ENCODE measurements at regions of chr1 and their contacts with region 1.

Region 1: GRCh38 chr1:44819608-44820327 is 11.4 kb downstream of the BTBD19 start:
- DNase-seq: peak in 41 of 42 donors; percentile 45 to 85 (median 67)

Region 2: GRCh38 chr1:44472620-44473525 is 346.9 kb before region 1 on chr1:
- intact Hi-C with region 1: no loop called
- DNase-seq: peak in 1 of 42 donors; percentile 33

Region 3: DNA sequence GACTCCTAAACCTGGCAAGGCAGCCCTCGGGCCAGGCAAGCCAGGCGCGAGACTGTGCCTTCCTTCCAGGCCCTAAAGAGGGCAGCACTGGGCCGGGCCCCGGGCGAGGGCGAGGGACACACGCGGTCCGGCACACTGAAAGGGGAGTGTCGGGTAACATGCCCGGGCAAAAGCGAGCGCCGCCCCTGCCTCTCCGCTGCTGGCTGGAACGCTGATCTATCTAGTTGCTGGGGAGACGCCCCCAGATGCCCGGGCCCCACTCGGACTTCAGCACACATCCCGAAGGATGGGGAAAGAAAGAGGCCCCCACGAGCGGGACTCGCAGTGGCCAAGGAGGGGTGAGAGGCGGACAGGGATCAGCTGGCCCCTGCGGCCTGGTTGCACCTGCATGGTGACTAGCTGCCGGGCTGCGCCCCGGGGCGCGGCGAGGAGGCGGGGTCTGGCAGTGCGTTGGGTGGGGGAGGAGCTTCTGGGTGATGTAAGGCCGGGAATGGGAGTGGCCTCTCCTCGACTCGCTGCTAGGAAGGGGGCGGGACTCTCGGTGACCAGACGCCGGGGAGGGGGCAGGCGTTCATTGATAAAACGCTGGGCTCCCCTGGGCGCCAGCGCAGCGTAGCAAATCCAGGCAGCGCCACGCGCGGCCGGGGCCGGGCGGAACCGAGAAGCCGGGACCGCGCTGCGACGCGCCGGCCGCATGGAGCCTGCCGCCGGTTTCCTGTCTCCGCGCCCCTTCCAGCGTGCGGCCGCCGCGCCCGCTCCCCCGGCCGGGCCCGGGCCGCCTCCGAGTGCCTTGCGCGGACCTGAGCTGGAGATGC is 19.8 kb before region 1 on chr1 and contains the start of gene PLK3:
- intact Hi-C with region 1: loop called (anchors 2 kb)
- DNase-seq: peak; percentile 93 to 100 (median 98)

Measured in head of caudate nucleus (tissue), 42 donors.